Esophagus squamous epithelium (tissue), 5 donors: ENCODE measurements at regions of chr4 and their contacts with region 1.

Region 1: DNA sequence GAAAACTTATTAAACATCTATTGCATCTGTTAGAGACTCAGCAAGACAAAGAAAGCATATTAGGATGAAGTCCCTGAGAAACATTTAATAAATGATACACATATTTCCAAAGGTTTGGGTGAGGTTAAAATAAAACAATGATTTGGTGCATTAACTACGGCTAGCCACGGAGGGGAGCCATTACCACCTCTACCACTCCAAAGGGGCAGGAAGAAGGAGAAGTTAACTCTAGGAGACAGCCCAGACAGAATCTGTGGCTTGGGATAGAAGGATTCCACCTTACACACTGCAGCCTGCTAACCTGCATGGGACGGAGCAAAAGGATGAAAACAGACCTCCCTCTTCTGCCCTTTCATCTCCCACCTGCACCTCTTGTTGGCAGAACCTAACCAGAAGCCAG is 189.1 kb upstream of the C1QTNF7 start:
- DNase-seq: no peak
- H3K4me3 ChIP-seq: no peak overlapping the region
- H3K27ac ChIP-seq: no peak overlapping the region
- H3K4me1 ChIP-seq: peaks cover 0 to 16% (median 5%) of the 10 kb centered on the region in 3 donors
- H3K27me3 ChIP-seq: peaks cover 0 to 6% (median 0%) of the 10 kb centered on the region in 4 donors
- CTCF ChIP-seq: peak in 5 of 6 experiments; percentile 38 to 76 (median 40)
- POLR2A ChIP-seq: no peak

Region 2: DNA sequence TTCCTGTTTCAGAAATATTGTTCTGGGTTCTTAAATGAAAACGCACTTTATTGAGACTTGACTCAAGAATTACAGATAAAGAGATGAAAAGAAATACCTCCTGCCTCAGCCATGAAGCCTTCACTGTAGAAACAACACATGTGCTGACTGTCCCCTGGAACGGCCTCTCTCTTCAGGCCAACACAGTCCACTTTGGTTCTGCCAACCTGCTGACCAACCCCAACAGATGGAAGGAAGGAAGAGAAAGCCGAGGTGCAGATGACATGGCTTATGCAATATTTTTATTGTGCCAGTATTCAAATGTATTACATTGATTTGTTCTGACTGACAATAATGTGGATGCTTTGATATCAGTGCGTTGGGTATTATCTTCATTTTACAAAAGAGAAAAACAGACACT is 65.5 kb before region 1 on chr4:
- intact Hi-C with region 1: no loop called
- DNase-seq: no peak
- H3K4me3 ChIP-seq: no peak overlapping the region
- H3K27ac ChIP-seq: no peak overlapping the region
- H3K4me1 ChIP-seq: no peaks in the 10 kb centered on the region
- H3K27me3 ChIP-seq: no peaks in the 10 kb centered on the region
- CTCF ChIP-seq: no peak
- POLR2A ChIP-seq: no peak

Region 3: GRCh38 chr4:15457406-15458201 is 218.9 kb after region 1 on chr4:
- intact Hi-C with region 1: loop called (anchors 5 kb)
- DNase-seq: no peak
- H3K4me3 ChIP-seq: no peak overlapping the region
- H3K27ac ChIP-seq: peak overlapping the region in 3 of 4 donors; percentile 53 to 88 (median 79)
- H3K4me1 ChIP-seq: peaks cover 4 to 26% (median 17%) of the 10 kb centered on the region in 3 donors
- H3K27me3 ChIP-seq: no peaks in the 10 kb centered on the region
- CTCF ChIP-seq: peak; percentile 65 to 84 (median 70)
- POLR2A ChIP-seq: no peak